MCF 10A (cell line): ENCODE measurements at regions of chr17 and their contacts with region 1.

Region 1: DNA sequence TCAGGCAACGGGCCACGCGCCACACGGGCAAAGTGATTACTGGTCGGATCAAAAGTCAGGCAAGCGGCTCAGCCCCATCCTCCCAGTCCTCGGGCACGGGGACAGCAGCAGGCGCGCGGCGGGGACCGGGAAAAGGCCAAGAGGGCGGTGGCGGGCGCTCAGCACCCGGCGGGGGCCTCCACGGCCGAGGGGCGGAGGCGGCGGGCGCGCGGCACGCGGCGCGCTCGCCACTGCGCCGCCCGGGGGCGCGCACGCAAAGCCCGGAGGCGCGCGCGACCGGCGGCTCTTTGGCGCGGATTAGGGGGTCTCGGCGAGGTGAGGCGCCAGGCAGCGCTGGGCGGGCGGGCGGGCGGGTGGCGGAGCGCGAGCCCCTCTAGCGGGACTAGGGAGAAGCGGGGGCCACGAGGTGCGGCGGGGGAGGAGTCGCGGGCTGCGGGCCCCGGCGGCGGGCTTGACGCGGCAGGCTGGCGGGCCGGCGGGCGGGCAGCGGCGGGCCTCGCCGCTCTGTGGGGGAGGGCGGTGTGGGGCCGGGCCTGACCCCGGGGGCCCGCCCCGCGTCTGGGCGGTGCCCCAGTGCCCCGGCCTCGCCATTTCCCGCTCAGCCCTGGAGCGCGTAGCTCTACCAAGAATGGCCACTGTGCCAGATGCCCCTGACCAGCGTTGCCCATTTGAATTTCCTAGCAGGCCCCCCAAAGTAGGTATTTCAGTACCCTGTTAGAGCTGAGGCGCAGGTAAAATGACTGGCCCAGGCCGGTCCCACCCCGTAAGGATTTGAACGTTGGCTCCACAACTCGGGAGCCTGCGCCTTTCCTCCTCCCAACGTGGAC is at the starts of genes ACACA and TADA2A:
- DNase-seq: peak; percentile 81
- H3K4me3 Mint-ChIP-seq: peak within 1 kb of the TSS; percentile 95
- H3K27ac Mint-ChIP-seq: peak within 1 kb of the TSS; percentile 52
- H3K4me1 Mint-ChIP-seq: peaks cover 10% of the 10 kb centered on the region
- H3K27me3 Mint-ChIP-seq: no peaks in the 10 kb centered on the region
- CTCF ChIP-seq: no peak
- total RNA-seq, gene ACACA: 88.6 and 100 TPM in 2 replicates
- total RNA-seq, gene TADA2A: 25.3 and 31.3 TPM in 2 replicates

Region 2: DNA sequence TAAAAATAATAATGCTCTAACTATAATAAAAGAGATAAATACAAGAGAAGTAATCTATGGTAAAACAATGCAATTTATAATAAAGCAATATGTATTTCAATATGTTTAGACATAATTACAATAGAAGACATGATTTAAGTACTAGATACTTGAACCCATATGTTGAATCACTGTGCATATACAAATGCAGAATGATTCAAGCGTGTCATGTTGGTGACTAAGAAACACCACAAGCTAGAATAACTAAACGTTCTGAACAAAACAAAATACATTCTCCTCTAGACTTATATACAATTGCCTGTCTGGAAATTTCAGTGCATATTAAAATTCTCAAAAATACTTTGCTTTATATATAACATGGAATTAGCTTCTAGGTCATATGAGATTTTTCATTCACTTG is 11.0 kb after region 1 on chr17:
- CTCF ChIA-PET with region 1: interaction called, 4 read pairs
- POLR2A ChIA-PET with region 1: interaction called, 13 read pairs
- intact Hi-C with region 1: no loop called
- DNase-seq: no peak
- H3K4me3 Mint-ChIP-seq: no peak overlapping the region
- H3K27ac Mint-ChIP-seq: no peak overlapping the region
- H3K4me1 Mint-ChIP-seq: no peaks in the 10 kb centered on the region
- H3K27me3 Mint-ChIP-seq: no peaks in the 10 kb centered on the region
- CTCF ChIP-seq: no peak